Activated B cell treated with CpG ODN at 0.5 μM for 24 hours (primary cell): ENCODE measurements at regions of chr2 and their contacts with region 1.

Region 1: DNA sequence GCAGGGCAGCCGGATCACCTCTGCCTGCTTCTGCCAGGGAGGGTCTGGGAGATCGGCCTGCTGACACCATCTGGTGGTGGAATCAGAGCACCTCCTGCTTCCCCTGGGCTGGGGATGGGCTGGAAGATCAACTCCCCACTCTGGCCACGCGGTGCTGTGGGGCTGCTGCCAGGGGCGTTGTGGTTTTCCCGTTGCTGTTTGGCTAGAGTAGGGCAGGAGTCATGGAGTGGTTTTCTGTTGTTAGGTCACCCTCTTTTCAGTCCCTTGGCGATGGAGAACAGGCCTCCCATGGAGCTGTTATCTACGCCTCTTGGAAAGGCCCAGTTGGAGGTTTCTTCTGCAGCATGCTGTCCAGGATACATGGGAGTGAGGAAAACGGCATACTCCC is 15.2 kb downstream of the BCL2L11 start:
- DNase-seq: no peak
- ATAC-seq: no peak
- H3K4me3 Mint-ChIP-seq: no peak overlapping the region
- H3K27ac Mint-ChIP-seq: no peak overlapping the region
- H3K4me1 Mint-ChIP-seq: peaks cover 40% of the 10 kb centered on the region
- H3K27me3 Mint-ChIP-seq: no peaks in the 10 kb centered on the region
- CTCF ChIP-seq: no peak

Region 2: DNA sequence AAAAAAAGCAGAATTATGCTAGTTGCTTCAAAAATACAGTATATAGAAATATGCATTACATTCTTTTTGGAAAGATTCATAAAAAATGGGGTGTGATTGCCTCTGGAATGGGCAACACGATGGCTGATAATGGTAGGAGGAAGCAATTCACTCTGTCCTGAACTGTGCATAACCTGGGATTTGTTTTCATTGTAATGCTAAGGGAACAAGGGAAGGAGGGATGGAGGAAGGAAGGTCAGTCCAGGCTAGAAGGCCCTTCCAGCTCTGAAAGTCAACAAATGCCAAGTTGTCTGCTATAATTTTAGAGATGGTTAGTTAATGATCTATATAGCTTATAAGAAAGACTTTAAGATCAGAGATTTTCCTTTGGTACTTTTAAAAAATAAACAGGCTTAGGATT is 498.8 kb before region 1 on chr2:
- CTCF ChIA-PET with region 1: no interaction called
- POLR2A ChIA-PET with region 1: no interaction called
- intact Hi-C with region 1: no loop called
- DNase-seq: no peak
- ATAC-seq: no peak
- H3K4me3 Mint-ChIP-seq: no peak overlapping the region
- H3K27ac Mint-ChIP-seq: no peak overlapping the region
- H3K4me1 Mint-ChIP-seq: no peaks in the 10 kb centered on the region
- H3K27me3 Mint-ChIP-seq: no peaks in the 10 kb centered on the region
- CTCF ChIP-seq: no peak

Region 3: GRCh38 chr2:111148925-111149324 is 13.0 kb after region 1 on chr2:
- CTCF ChIA-PET with region 1: interaction called, 3 read pairs
- POLR2A ChIA-PET with region 1: interaction called, 5 read pairs
- intact Hi-C with region 1: loop called (anchors 2 kb)
- DNase-seq: no peak
- ATAC-seq: no peak
- H3K4me3 Mint-ChIP-seq: no peak overlapping the region
- H3K27ac Mint-ChIP-seq: no peak overlapping the region
- H3K4me1 Mint-ChIP-seq: peaks cover 12% of the 10 kb centered on the region
- H3K27me3 Mint-ChIP-seq: no peaks in the 10 kb centered on the region
- CTCF ChIP-seq: no peak